Activated CD4-positive, alpha-beta T cell treated with anti-CD3 and anti-CD28 coated beads, Interleukin-2, amount 10 ng/mL, durations not matched to agents 24 days and 14 days (primary cell): ENCODE measurements at regions of chr12 and their contacts with region 1.

Region 1: GRCh38 chr12:6851921-6852650 is at the start of gene USP5:
- DNase-seq: peak; percentile 99
- H3K4me3 Mint-ChIP-seq: peak within 1 kb of the TSS; percentile 89
- H3K27ac Mint-ChIP-seq: peak within 1 kb of the TSS; percentile 97
- H3K4me1 Mint-ChIP-seq: peaks cover 38% of the 10 kb centered on the region
- H3K27me3 Mint-ChIP-seq: no peaks in the 10 kb centered on the region
- total RNA-seq, gene USP5: 121 TPM in 2 replicates

Region 2: GRCh38 chr12:6476489-6476888 is 375.6 kb before region 1 on chr12:
- intact Hi-C with region 1: no loop called
- DNase-seq: no peak
- H3K4me3 Mint-ChIP-seq: no peak overlapping the region
- H3K27ac Mint-ChIP-seq: no peak overlapping the region
- H3K4me1 Mint-ChIP-seq: peaks cover 9% of the 10 kb centered on the region
- H3K27me3 Mint-ChIP-seq: peaks cover 10% of the 10 kb centered on the region

Region 3: GRCh38 chr12:6493497-6494257 is 358.4 kb before region 1 on chr12 and contains the start of gene NCAPD2:
- intact Hi-C with region 1: loop called (anchors 5 kb)
- DNase-seq: peak; percentile 99
- H3K4me3 Mint-ChIP-seq: peak within 1 kb of the TSS; percentile 95
- H3K27ac Mint-ChIP-seq: peak within 1 kb of the TSS; percentile 98
- H3K4me1 Mint-ChIP-seq: peaks cover 34% of the 10 kb centered on the region
- H3K27me3 Mint-ChIP-seq: no peaks in the 10 kb centered on the region
- total RNA-seq, gene NCAPD2: 104 and 106 TPM in 2 replicates

Region 4: DNA sequence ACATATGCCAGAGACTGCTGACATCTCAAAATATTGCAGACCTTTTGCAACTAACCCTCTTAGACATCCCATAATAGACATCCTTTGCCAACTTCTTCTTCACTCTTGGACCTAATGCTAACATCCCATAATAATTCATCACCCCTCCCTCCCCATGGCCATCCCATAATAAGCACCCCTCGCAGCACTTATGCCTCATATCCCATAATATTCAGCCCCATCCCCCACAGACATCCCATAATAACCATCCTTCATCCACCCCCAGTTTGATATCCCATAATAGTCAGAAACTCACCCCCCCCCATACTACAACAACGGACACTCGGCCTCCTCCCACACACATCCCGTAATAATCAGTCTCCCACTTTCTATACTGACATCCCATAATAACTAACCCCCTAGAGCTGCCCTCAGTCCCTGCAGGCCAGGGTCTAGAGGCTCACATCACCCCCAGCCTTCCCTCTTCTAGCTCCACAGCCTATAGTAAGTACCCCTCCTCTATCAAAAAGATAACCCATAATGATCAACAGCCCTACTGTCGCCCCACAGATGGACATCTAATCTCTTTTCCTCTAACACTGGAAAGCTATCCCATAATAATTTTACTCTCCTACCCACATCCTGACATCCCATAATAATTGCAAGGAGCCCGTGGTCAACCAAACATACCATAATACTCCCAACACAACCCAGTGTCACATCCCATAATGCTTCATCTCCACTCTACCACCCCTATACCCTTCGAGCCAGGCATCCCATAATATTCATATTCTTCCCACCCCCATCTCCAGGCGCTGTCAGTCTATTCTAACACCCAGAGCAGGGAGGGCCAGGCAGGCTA is 244.1 kb before region 1 on chr12:
- intact Hi-C with region 1: loop called (anchors 2 kb)
- DNase-seq: peak; percentile 89
- H3K4me3 Mint-ChIP-seq: no peak overlapping the region
- H3K27ac Mint-ChIP-seq: no peak overlapping the region
- H3K4me1 Mint-ChIP-seq: peaks cover 45% of the 10 kb centered on the region
- H3K27me3 Mint-ChIP-seq: no peaks in the 10 kb centered on the region

Region 5: DNA sequence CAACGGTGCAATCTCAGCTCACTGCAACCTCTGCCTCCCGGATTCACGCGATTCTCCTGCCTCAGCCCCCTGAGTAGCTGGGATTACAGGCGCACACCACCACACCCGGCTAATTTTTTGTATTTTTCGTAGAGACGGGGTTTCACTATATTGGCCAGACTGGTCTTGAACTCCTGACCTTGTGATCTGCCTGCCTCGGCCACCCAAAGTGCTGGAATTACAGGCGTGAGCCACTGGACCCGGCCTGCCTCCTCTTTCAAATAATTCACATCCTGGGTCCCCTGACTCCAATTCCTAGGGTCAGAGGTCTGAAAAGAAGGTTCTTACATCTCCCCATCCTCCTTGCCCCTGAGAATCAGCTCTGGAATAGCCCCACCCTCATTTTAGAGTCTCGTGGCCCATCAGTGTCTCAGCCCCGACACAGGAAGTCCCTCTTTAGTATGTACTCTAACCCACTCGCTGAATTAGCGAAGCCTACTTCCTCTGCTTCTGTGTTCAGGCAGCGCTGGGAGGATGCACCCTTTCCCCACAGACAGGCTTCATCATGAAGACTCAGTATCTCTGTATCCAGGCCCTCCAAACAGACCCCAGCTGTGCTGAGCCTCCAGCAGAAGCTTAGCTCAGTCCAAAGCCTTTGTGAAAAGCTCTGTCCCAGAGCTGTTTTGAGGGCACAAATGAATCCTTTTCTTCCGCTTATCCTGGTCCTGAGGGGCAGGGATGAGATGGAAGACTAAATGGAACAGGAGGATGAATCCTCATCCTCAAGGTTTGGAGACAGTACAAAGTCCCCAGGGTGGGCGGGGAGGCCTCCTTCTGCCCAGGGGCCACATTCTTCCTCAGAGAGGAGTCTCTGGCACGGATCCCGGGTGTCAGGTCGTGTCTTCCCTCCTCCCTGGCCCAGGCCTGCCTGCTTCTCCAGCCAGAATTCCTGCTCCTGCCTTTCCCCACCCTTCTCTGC is 219.8 kb before region 1 on chr12:
- intact Hi-C with region 1: no loop called
- DNase-seq: peak; percentile 88
- H3K4me3 Mint-ChIP-seq: peak overlapping the region; percentile 84
- H3K27ac Mint-ChIP-seq: peak overlapping the region; percentile 94
- H3K4me1 Mint-ChIP-seq: peaks cover 51% of the 10 kb centered on the region
- H3K27me3 Mint-ChIP-seq: no peaks in the 10 kb centered on the region

Region 6: DNA sequence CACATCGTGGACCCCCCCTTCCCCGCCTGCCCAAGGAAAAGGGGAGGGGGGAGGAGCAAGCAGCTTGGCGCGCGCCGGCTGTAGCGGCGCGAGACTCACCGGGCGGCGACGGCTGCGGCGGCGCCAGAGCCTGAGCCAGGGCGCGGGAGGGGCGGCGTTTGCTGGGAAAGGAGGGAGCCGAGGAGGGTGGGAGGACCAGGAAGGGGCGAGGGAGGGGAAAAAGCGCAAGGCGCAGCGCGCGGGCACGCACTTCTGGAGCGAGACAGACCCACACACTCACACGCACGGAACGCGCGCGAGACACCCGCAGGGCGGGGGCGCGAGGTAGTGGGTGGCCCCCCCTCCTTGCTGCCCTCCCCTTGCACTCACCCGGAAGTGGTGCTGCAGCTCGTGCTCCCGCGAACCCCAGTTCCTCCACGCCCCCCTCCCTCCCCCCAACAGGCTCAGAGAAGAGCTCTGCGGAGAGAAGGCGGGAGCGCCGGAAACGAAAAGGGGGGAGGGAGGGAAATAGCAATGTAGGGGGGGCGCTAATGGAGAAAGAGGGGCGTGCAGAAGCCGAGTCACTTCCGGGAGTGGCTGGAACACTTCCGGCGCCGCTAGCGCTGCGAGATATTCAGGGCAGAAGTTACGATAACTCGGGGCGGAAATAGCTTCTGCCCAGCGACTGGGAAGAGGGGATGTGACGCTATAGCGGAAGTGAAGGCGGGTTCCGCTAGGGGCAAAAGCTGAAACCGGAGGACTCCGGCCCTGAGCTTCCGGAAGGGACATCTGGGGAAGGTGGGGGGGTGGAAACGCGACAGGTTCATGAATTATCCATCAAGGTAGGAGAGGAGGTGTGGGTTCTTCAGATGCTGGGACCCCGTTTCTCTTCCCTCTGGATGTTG is 162.8 kb before region 1 on chr12 and contains the start of gene ZNF384:
- intact Hi-C with region 1: loop called (anchors 1 kb)
- DNase-seq: peak; percentile 98
- H3K4me3 Mint-ChIP-seq: peak within 1 kb of the TSS; percentile 96
- H3K27ac Mint-ChIP-seq: peak within 1 kb of the TSS; percentile 93
- H3K4me1 Mint-ChIP-seq: peaks cover 38% of the 10 kb centered on the region
- H3K27me3 Mint-ChIP-seq: no peaks in the 10 kb centered on the region
- total RNA-seq, gene ZNF384: 83.6 and 84.4 TPM in 2 replicates

Region 7: DNA sequence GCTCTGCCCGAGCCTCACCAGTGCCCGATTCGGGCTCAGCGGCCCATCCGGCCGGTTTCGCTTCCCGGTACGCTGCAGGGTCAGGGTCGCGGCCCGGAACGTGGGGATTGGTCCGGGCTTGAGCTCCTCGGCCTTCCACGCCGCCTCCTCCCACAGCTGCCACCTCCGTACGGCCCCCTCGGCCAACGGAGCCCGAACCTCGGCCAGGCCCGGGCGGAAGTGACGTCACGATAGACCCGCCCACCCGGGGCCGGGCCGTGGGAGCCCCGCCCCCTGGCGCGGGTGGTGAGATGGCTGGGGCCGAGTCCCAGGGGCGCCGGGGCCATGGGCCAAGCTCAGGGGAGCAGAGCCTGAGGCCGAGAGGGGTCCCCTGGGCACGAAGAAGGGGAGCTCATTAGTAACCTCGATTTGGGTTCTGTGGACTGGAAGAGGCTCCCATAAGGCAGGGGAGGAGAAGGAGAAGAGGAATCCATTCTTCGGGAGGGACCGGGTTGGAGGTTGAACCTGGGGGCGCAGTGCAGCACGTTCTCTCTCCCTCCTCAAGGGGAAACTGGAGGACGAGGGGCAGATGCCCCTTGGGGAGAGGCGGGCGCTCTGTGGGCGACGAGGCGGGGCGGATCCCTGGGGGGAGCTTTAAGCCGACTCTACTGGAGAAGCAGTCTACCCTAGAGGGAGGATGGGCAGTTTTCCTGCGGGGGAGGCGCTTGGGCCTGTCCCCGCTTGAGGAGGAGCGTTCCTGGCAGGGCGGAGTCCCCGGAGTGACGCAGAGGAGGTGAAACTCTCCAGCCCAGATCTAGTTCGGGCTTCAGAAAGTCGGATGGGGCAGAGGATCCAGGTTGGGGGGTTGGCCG is 98.9 kb before region 1 on chr12 and contains the start of gene MLF2:
- intact Hi-C with region 1: loop called (anchors 1 kb)
- DNase-seq: peak; percentile 100
- H3K4me3 Mint-ChIP-seq: peak within 1 kb of the TSS; percentile 96
- H3K27ac Mint-ChIP-seq: peak within 1 kb of the TSS; percentile 98
- H3K4me1 Mint-ChIP-seq: peaks cover 26% of the 10 kb centered on the region
- H3K27me3 Mint-ChIP-seq: peaks cover 1% of the 10 kb centered on the region
- total RNA-seq, gene MLF2: 163 and 180 TPM in 2 replicates

Region 8: GRCh38 chr12:6890789-6891645 is 38.9 kb after region 1 on chr12:
- intact Hi-C with region 1: loop called (anchors 1 kb)
- DNase-seq: peak; percentile 100
- H3K4me3 Mint-ChIP-seq: peak overlapping the region; percentile 83
- H3K27ac Mint-ChIP-seq: peak overlapping the region; percentile 97
- H3K4me1 Mint-ChIP-seq: peaks cover 21% of the 10 kb centered on the region
- H3K27me3 Mint-ChIP-seq: no peaks in the 10 kb centered on the region

Region 9: DNA sequence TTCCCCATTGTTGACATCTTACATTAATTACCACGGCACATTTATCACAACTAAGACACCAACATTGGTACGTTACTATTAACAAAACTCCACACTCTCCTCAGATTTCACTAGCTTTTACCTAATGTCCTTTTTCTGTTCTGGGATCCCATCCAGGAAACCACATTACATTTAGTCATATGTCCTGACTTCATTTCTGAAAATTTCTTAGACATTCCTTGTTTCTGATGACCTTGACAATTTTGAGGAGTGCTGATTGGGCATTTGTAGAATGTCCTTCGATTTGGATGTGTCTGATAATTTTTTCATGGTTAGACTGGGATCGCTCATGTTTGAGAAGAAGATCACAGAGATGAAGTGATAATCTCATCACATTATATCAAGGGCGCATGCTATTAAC is 417.2 kb after region 1 on chr12:
- intact Hi-C with region 1: no loop called
- DNase-seq: no peak
- H3K4me3 Mint-ChIP-seq: no peak overlapping the region
- H3K27ac Mint-ChIP-seq: no peak overlapping the region
- H3K4me1 Mint-ChIP-seq: no peaks in the 10 kb centered on the region
- H3K27me3 Mint-ChIP-seq: no peaks in the 10 kb centered on the region